Activated naive CD4-positive, alpha-beta T cell treated with anti-CD3 and anti-CD28 coated beads for 36 hours (primary cell): ENCODE measurements at regions of chr1 and their contacts with region 1.

Region 1: DNA sequence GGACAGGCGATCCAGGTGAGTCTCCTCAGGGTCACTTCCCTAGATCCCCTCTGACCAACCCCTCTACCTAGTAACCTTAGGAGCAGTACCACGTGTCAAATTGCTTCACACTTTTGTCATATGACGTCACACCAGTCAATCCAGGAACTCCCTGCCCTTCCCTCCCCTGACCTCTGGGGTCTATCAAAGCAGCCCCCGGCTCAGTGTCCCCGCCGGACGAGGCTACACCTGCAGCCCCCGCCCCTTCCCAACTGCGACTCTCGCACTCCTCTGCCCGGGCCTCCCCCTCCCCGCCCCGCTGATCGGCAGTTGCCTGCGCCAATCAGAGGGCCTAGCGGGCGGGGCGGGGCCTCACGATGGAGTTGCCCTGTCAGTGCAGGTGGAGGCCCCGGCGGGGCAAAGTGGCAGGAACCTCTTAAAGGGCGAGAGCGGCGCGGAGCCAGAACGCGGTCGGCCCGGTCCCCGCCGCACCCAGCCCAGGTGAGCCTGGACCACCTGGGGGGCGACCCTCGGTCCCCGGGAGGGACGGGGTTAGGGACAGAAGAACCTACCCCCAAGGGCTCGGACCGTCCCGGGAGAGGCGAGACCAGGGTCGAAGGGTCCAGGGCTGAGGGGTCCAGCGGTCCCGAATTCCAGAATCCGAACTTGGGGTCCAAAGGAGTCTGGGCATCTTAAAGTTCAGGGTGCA is 27.5 kb upstream of the EPB41 start:
- DNase-seq: peak; percentile 92
- H3K4me3 Mint-ChIP-seq: peak overlapping the region; percentile 81
- H3K27ac Mint-ChIP-seq: peak overlapping the region; percentile 92
- H3K4me1 Mint-ChIP-seq: peaks cover 48% of the 10 kb centered on the region
- H3K27me3 Mint-ChIP-seq: no peaks in the 10 kb centered on the region

Region 2: GRCh38 chr1:28648474-28649198 is 238.2 kb before region 1 on chr1 and contains the start of gene RNU11:
- CTCF ChIA-PET with region 1: no interaction called
- intact Hi-C with region 1: loop called (anchors 1 kb)
- DNase-seq: peak; percentile 92
- H3K4me3 Mint-ChIP-seq: peak within 1 kb of the TSS; percentile 92
- H3K27ac Mint-ChIP-seq: peak within 1 kb of the TSS; percentile 99
- H3K4me1 Mint-ChIP-seq: peaks cover 28% of the 10 kb centered on the region
- H3K27me3 Mint-ChIP-seq: no peaks in the 10 kb centered on the region
- total RNA-seq, gene RNU11: not detected

Region 3: GRCh38 chr1:28744184-28744583 is 142.7 kb before region 1 on chr1:
- CTCF ChIA-PET with region 1: no interaction called
- intact Hi-C with region 1: no loop called
- DNase-seq: no peak
- H3K4me3 Mint-ChIP-seq: peak overlapping the region; percentile 10
- H3K27ac Mint-ChIP-seq: peak overlapping the region; percentile 31
- H3K4me1 Mint-ChIP-seq: peaks cover 74% of the 10 kb centered on the region
- H3K27me3 Mint-ChIP-seq: no peaks in the 10 kb centered on the region

Region 4: GRCh38 chr1:28926629-28927265 is 39.9 kb after region 1 on chr1:
- CTCF ChIA-PET with region 1: interaction called, 4 read pairs
- intact Hi-C with region 1: loop called (anchors 2 kb)
- DNase-seq: peak; percentile 40
- H3K4me3 Mint-ChIP-seq: peak overlapping the region; percentile 44
- H3K27ac Mint-ChIP-seq: peak overlapping the region; percentile 76
- H3K4me1 Mint-ChIP-seq: peaks cover 62% of the 10 kb centered on the region
- H3K27me3 Mint-ChIP-seq: no peaks in the 10 kb centered on the region

Region 5: GRCh38 chr1:29033829-29034466 is 147.1 kb after region 1 on chr1:
- CTCF ChIA-PET with region 1: interaction called, 277 read pairs
- intact Hi-C with region 1: loop called (anchors 1 kb)
- DNase-seq: no peak
- H3K4me3 Mint-ChIP-seq: no peak overlapping the region
- H3K27ac Mint-ChIP-seq: no peak overlapping the region
- H3K4me1 Mint-ChIP-seq: no peaks in the 10 kb centered on the region
- H3K27me3 Mint-ChIP-seq: no peaks in the 10 kb centered on the region

Region 6: GRCh38 chr1:29124366-29125236 is 237.7 kb after region 1 on chr1:
- CTCF ChIA-PET with region 1: interaction called, 15 read pairs
- intact Hi-C with region 1: loop called (anchors 1 kb)
- DNase-seq: peak; percentile 64
- H3K4me3 Mint-ChIP-seq: peak overlapping the region; percentile 70
- H3K27ac Mint-ChIP-seq: no peak overlapping the region
- H3K4me1 Mint-ChIP-seq: peaks cover 12% of the 10 kb centered on the region
- H3K27me3 Mint-ChIP-seq: peaks cover 21% of the 10 kb centered on the region

Region 7: DNA sequence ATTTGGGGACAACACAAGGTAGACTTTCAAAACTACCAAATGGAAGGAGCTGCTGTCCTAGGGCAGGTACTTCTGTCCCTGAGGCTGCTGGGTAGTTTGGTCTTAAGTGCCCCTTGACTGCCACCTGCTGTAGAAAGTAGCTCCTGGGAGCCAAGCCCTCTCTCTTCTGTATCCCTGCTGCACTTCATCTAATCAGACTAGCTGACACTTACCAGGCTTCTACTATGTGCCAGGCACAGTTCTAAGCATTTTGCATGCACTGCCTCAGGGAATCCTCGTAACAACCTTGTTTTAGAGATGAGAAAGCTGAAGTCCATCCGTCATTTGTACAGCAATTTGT is 310.7 kb after region 1 on chr1:
- CTCF ChIA-PET with region 1: interaction called, 71 read pairs
- intact Hi-C with region 1: loop called (anchors 1 kb)
- DNase-seq: peak; percentile 57
- H3K4me3 Mint-ChIP-seq: no peak overlapping the region
- H3K27ac Mint-ChIP-seq: no peak overlapping the region
- H3K4me1 Mint-ChIP-seq: peaks cover 3% of the 10 kb centered on the region
- H3K27me3 Mint-ChIP-seq: no peaks in the 10 kb centered on the region

Region 8: GRCh38 chr1:29230553-29231378 is 343.9 kb after region 1 on chr1 and contains the start of gene MECR:
- CTCF ChIA-PET with region 1: interaction called, 3 read pairs
- intact Hi-C with region 1: loop called (anchors 1 kb)
- DNase-seq: peak; percentile 96
- H3K4me3 Mint-ChIP-seq: peak within 1 kb of the TSS; percentile 96
- H3K27ac Mint-ChIP-seq: peak within 1 kb of the TSS; percentile 80
- H3K4me1 Mint-ChIP-seq: peaks cover 11% of the 10 kb centered on the region
- H3K27me3 Mint-ChIP-seq: peaks cover 4% of the 10 kb centered on the region
- total RNA-seq, gene MECR: 35.7 to 36.3 TPM